Left cardiac atrium (tissue), 4 donors: ENCODE measurements at regions of chr14 and their contacts with region 1.

Region 1: DNA sequence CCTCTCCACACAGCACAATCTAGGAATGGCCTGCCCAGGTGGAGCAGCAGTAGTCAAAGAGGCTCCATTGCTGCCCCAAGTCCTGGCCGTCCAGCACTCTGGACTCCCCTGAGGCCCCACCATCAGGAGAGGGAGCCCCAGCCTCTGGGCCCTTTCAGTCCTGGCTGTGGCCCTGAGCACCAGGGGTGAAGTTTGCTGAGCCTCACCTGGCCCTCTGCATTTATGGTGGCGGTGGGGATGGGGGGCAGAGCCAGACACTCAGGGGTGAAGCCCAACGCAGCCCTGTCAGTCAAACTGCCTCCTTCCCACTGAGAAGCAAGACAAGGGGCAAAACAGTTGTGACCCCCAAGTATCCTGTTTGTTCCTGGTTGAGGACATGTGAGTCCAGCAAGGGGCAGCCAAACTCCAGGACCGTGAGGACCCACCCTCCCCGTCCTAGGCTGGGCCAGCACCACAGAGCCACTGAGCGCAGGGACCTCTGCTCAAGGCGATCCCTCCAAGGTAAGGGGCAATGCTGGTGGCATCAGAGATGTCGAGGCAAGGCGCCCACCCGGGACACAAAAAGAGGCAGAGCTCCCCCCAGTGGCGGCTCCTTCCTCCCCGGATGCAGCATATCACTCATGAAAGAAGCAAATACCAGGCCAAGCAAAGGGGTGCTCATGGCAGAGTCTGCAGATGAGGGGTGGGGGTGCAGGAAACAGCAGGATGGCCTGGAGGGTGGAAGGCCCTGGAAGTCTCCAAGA is 4.8 kb upstream of the AMN start:
- DNase-seq: peak; percentile 64
- ATAC-seq: peak; percentile 33 to 35

Region 2: DNA sequence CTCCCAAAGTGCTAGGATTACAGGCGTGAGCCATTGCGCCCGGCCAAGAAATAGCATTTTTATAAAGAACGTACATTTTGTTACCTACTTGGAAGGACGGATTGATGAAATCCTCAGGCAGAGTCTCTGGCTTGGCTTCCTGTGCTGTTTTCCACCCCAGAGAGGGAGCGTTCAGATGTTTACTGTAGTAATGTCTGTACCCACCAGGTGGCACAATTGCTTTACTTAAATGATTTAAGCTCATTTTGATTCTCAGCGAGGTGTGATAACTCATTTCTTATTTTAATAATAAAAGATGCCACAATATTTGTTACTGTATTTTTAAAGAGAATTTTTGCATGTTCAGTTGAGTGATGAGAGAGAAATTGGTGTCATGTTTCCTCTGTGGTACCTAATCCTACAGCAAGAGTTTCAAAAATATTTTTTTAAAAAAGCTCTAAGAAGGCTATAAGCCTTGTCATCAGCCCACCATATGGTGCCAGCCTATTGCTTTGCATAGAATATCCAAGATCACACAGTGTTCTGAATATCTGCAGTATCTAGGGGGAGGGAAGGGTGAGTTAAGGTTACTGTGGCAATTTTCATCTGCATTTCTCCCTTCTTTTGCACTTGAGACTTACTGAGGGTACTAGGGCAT is 223.0 kb before region 1 on chr14:
- intact Hi-C with region 1: loop called (anchors 5 to 10 kb)
- DNase-seq: peak; percentile 44
- ATAC-seq: peak; percentile 61 to 68

Region 3: DNA sequence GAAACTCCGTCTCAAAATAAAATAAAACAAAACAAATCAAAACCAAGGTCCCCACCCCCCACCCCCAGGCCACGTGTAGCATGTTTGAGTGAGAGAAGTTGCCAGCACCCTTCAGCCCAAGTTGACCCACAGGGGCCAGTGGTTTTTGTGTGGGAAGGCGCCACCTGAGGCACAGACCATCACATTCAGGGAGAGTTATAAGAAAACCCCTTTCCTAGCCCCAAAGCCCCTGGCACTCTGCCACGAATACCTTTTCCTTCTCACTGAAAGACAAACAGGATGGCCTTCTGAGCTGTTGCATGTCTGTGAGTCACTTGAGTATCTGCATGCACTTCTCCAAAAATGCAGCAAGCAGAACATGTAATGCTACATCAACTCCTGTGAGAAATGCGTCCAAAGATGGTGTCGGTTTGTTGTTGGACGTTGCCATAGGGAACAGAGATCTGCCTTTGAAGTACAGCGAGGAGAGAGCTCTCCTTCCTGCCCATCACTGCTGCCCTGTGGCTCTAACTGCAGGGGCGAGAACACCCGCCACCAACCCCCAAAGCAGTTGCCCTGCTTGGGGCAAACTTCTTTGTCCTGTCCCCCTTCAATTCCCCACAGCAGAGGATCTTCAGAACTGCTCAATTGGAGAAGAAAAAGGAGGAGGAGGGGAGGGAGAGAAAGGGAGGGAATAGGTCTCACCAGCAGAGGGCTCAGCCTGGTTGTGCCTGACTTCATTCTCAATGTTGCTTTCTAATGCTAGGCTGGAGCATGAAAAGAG is 143.1 kb before region 1 on chr14:
- intact Hi-C with region 1: loop called (anchors 5 kb)
- DNase-seq: peak; percentile 37
- ATAC-seq: peak; percentile 36 to 67